Activated naive CD4-positive, alpha-beta T cell treated with anti-CD3 and anti-CD28 coated beads for 36 hours (primary cell): ENCODE measurements at regions of chr22 and their contacts with region 1.

Region 1: GRCh38 chr22:46798366-46799350 is 36.2 kb downstream of the TBC1D22A start:
- DNase-seq: peak; percentile 80
- H3K4me3 Mint-ChIP-seq: no peak overlapping the region
- H3K27ac Mint-ChIP-seq: no peak overlapping the region
- H3K4me1 Mint-ChIP-seq: peaks cover 18% of the 10 kb centered on the region
- H3K27me3 Mint-ChIP-seq: no peaks in the 10 kb centered on the region

Region 2: GRCh38 chr22:46703171-46703995 is 95.3 kb before region 1 on chr22:
- CTCF ChIA-PET with region 1: no interaction called
- intact Hi-C with region 1: no loop called
- DNase-seq: no peak
- H3K4me3 Mint-ChIP-seq: no peak overlapping the region
- H3K27ac Mint-ChIP-seq: no peak overlapping the region
- H3K4me1 Mint-ChIP-seq: no peaks in the 10 kb centered on the region
- H3K27me3 Mint-ChIP-seq: no peaks in the 10 kb centered on the region

Region 3: DNA sequence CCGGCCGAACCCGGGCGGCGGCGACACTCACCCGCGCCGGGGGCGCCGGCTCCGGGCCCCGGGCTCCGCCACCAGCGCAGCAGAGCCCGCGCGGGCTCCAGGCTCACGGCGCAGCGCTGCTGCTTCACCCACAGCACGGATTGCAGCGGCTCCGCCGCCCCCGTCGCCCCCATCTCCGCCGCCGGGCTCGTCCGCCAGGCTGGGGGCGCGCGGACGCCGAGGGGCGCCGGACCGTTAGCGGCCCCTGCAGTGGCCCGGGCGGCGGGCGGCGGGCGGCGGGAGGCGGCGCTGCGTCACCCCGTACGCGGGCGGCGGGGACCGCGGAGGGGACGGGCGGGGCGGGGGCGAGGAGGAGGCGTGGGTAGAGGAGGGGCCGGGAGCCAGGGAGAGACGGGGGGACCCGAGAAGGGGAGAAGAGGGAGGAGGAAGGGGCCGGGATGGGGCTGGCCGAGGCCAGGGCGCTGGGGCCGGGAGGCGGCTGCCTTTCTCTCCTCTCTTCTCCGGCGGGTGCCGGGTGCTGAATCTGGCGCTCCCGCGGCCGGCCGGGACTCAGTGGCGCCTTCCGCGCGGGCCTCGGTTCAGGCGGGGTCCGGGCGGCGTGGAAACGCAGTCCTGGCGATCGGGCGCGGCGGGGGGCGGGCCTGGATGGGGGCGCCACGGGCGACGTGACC is 60.5 kb before region 1 on chr22 and contains the start of gene CERK:
- CTCF ChIA-PET with region 1: interaction called, 23 read pairs
- intact Hi-C with region 1: loop called (anchors 2 kb)
- DNase-seq: peak; percentile 72
- H3K4me3 Mint-ChIP-seq: peak within 1 kb of the TSS; percentile 100
- H3K27ac Mint-ChIP-seq: peak within 1 kb of the TSS; percentile 99
- H3K4me1 Mint-ChIP-seq: peaks cover 40% of the 10 kb centered on the region
- H3K27me3 Mint-ChIP-seq: no peaks in the 10 kb centered on the region
- total RNA-seq, gene CERK: 32.6 to 34.9 TPM

Region 4: GRCh38 chr22:46748908-46749675 is 49.6 kb before region 1 on chr22:
- CTCF ChIA-PET with region 1: interaction called, 214 read pairs
- intact Hi-C with region 1: no loop called
- DNase-seq: peak; percentile 65
- H3K4me3 Mint-ChIP-seq: peak overlapping the region; percentile 48
- H3K27ac Mint-ChIP-seq: peak overlapping the region; percentile 32
- H3K4me1 Mint-ChIP-seq: peaks cover 22% of the 10 kb centered on the region
- H3K27me3 Mint-ChIP-seq: no peaks in the 10 kb centered on the region

Region 5: GRCh38 chr22:46815896-46816731 is 17.5 kb after region 1 on chr22:
- CTCF ChIA-PET with region 1: interaction called, 13 read pairs
- intact Hi-C with region 1: no loop called
- DNase-seq: no peak
- H3K4me3 Mint-ChIP-seq: no peak overlapping the region
- H3K27ac Mint-ChIP-seq: no peak overlapping the region
- H3K4me1 Mint-ChIP-seq: peaks cover 38% of the 10 kb centered on the region
- H3K27me3 Mint-ChIP-seq: no peaks in the 10 kb centered on the region

Region 6: DNA sequence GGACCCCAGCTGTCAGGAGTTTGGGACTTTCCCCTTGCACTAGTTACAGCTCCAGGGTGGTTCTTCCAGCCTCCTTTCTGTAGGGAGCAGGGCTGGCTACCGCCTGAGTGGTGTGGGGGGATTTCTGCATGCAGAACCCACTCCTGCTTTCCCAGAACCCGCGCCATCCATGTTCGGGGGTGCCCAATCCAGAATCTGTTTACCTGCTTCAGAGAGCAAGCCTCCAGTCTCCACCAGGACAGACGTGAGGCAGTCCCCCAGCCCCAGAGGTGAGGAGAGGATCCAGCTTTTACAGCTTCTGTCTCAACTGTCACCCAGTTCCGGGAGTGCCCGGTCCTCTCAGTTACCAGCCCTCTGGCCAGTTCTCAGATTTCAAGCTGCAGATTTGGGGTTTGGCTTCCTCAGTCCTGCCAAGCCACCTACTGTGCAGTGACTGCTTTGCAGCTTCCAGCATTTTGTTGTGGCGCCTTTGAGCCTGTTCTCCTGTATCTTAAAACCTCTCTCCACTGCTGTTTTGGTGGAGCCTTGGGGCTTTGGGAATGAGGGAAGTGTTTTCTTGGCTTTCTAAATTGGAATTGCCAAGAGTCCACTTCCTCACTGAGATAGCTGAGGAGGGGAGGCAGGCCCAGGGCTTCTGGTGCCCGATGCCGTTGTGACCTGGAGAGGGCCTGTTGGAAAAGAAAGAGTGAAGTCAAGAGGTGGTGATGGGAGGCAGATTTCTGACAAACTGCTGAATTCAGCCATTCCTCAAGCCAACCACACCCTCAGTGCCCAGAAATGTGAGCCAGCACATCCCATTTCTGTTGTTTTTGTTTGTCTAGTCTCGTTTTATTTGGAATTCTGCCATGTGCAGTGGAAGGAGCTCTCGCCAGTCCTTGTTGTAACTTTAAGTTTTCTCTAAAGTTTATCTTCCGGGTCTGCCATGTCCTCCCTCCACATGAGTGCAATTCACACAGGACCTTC is 477.1 kb after region 1 on chr22:
- CTCF ChIA-PET with region 1: no interaction called
- intact Hi-C with region 1: no loop called
- DNase-seq: no peak
- H3K4me3 Mint-ChIP-seq: no peak overlapping the region
- H3K27ac Mint-ChIP-seq: no peak overlapping the region
- H3K4me1 Mint-ChIP-seq: no peaks in the 10 kb centered on the region
- H3K27me3 Mint-ChIP-seq: no peaks in the 10 kb centered on the region